Activated naive CD4-positive, alpha-beta T cell treated with anti-CD3 and anti-CD28 coated beads for 36 hours (primary cell): ENCODE measurements at regions of chr10 and their contacts with region 1.

Region 1: DNA sequence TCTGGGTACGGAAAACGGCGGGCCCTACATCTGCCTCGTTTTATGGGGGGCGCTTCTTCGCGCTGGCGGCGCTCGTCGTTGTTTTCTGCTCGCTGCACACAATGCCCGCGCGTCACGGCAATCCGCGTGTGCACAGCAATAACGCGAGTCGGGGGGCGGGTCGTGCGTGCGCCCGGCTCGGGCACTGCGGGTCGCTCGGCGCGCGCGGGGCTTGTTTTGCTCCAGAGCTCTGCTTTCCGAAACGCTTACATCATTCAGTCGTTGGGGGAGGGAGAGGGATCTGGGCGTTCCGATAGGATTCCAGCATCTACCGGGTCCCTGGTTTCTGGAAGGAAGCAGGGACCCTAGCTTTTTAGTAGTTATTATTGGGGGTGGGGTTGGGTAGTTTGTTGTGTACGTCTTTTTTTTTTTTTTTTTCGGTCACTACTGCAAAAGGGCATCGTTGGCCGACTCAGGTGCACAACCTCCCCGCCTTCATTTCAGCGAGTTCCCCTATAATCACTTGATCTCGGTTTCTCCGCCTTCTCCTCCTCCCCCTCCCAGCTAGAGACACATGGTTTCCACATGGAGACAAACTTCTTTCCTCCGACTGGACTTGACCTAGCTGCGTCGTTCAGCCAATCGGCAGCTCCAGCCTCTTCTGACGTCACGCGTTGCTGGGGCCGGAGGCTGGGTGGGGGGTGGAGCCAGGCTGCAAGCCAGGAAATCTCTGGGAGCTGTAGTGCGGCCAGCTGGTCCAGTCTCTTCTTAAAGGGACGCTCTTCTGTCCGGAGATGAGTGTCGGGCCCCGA is 3.5 kb downstream of the MXI1 start:
- DNase-seq: peak; percentile 97
- H3K4me3 Mint-ChIP-seq: peak overlapping the region; percentile 96
- H3K27ac Mint-ChIP-seq: peak overlapping the region; percentile 97
- H3K4me1 Mint-ChIP-seq: peaks cover 50% of the 10 kb centered on the region
- H3K27me3 Mint-ChIP-seq: peaks cover 3% of the 10 kb centered on the region

Region 2: DNA sequence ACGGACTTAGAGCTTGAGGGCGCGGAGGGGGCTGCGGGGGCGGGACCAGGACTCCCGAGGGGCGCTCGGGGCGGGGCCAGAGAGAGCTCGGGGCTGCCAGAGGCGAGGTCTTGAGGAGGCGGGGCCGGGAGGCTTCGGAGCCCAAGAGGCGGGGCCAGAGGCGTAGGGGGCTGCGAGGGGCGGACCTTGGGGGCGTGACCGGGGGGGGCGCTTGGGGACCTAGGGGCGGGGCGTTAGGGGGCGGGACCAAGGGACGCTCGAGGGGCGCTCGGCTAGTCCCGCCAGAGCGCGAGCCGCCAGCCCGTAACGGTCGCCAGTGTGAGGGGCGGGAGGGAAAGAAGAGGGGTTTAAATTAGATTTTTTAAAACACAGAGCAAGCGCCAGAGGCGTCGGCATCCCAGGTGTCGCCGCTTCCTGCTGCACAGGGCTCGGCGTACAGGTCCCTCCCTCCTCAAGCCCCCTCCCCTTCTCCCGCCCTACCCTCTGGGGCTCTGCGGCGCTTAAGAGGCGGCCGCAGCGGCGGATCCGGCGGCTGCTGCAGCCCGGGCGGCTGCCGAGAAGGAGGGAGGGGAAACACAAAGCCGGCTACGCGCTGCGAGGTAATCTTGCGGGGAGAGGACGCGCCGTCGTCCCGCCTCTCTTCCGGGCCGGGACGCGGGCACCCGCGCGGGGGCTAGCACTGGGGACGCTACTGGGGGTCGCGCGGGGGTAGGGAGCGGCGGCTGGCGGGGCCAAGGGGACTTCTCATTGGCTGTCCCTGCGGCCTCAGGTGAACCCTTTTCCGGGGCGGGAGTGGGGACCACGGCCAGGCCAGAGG is 203.0 kb before region 1 on chr10 and contains the start of gene ADD3:
- CTCF ChIA-PET with region 1: no interaction called
- intact Hi-C with region 1: loop called (anchors 1 kb)
- DNase-seq: peak; percentile 85
- H3K4me3 Mint-ChIP-seq: no peak within 1 kb of the TSS
- H3K27ac Mint-ChIP-seq: peak within 1 kb of the TSS; percentile 91
- H3K4me1 Mint-ChIP-seq: peaks cover 45% of the 10 kb centered on the region
- H3K27me3 Mint-ChIP-seq: no peaks in the 10 kb centered on the region
- total RNA-seq, gene ADD3: 85.2 to 85.8 TPM

Region 3: DNA sequence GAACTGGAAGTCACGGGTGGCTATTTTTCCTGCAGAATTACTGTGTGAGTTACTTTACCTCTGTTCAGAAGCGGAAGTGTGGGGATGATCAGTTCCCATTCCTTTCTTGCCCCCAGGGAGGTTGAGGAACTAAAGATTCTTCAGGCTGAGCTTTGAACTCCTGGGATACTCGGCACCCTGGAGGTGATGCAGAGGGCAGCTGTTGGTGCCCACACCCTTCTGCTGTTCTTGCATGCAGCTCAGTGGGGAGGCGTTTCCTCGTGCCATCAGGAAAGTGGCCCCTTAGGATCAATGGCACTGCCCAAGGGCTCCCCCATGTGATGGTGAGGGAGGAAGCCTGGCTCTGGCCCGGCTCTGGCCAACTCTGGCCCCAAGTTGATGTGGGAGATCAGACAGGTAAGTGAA is 48.1 kb before region 1 on chr10:
- CTCF ChIA-PET with region 1: interaction called, 4 read pairs
- intact Hi-C with region 1: loop called (anchors 5 kb)
- DNase-seq: no peak
- H3K4me3 Mint-ChIP-seq: no peak overlapping the region
- H3K27ac Mint-ChIP-seq: no peak overlapping the region
- H3K4me1 Mint-ChIP-seq: peaks cover 3% of the 10 kb centered on the region
- H3K27me3 Mint-ChIP-seq: peaks cover 59% of the 10 kb centered on the region

Region 4: DNA sequence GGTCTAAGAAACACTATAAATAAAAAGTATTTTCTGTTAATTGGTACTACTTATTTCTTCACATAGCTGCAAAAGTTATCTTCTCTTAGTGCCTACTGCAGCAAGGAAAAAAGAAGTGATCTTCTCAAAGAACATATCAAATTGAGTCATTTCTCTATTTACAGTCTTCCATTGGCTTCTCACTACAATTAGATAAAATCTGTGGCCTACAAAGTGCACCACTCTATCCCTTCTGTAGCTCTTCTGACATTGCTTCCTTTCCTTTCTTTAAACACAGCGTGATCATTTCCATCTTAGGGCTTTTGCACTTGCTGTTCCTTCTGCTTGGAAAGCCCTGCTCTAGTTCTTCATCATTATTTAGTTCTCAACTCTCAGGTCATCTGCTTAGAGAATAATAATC is 41.3 kb after region 1 on chr10:
- CTCF ChIA-PET with region 1: interaction called, 12 read pairs
- intact Hi-C with region 1: loop called (anchors 1 kb)
- DNase-seq: no peak
- H3K4me3 Mint-ChIP-seq: no peak overlapping the region
- H3K27ac Mint-ChIP-seq: no peak overlapping the region
- H3K4me1 Mint-ChIP-seq: peaks cover 41% of the 10 kb centered on the region
- H3K27me3 Mint-ChIP-seq: peaks cover 8% of the 10 kb centered on the region

Region 5: DNA sequence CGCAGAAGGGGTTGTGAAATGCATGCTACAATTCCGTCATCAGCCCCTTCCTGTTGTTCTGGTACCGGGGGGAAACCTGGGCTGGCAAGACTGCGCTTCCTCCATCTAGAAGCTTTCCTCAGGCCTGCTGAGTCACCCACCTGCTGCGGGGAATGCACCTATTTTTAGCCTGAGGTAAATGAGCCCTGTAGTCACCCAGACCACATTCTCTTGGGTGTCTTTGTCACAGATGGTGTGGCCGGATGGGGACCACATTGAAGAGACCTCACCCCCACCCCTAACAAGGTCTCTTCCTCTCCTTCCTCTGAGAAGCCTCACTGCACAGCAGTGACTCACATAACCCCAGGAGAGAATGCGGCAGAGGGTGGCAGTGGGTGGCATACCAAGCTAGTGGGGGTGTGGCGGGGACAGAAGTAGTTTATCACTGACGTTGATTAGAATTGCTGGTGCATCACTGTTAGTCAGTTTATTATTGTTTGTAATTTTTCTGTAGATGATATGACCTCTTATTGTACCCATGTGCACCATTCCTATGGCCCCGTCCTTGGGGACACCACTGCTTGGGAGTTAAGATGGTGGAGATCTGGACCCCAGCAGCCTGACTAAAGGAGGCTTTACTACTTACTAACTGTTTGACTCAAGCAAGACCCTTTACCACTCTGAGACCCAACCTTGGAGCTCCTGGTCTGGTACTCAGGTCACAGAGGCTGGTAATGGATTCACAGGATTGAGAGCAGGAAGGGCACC is 203.9 kb after region 1 on chr10:
- CTCF ChIA-PET with region 1: no interaction called
- intact Hi-C with region 1: loop called (anchors 5 kb)
- DNase-seq: peak; percentile 98
- H3K4me3 Mint-ChIP-seq: peak overlapping the region; percentile 41
- H3K27ac Mint-ChIP-seq: peak overlapping the region; percentile 84
- H3K4me1 Mint-ChIP-seq: peaks cover 73% of the 10 kb centered on the region
- H3K27me3 Mint-ChIP-seq: no peaks in the 10 kb centered on the region

Region 6: DNA sequence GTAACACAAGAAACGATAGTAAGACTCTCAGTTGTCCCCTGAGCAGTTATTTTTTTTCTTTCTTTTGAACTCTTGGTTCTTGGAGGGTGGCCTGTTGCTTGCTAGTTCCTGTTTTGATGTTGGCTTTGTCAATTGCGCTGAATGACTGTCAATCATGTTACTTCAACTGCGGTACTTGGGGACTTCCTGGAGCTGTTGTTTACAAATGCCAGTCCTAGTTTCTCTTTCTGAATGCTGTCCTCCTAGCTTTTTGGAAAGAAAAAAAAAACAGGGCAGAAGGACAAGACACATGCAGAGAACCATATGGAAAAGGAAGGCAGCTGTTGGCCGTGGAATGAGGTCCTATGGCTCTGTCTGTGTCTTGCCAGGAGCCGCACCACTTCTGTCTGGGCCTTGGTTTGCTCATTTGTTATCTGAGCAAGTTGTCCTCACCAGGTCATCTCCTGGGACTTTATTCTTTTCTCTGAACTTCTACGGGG is 653.8 kb after region 1 on chr10:
- CTCF ChIA-PET with region 1: no interaction called
- intact Hi-C with region 1: loop called (anchors 5 kb)
- DNase-seq: peak; percentile 69
- H3K4me3 Mint-ChIP-seq: peak overlapping the region; percentile 58
- H3K27ac Mint-ChIP-seq: peak overlapping the region; percentile 84
- H3K4me1 Mint-ChIP-seq: peaks cover 96% of the 10 kb centered on the region
- H3K27me3 Mint-ChIP-seq: no peaks in the 10 kb centered on the region